Left ventricle myocardium inferior (tissue), 1 donor: ENCODE measurements at regions of chrX and their contacts with region 1.

Region 1: DNA sequence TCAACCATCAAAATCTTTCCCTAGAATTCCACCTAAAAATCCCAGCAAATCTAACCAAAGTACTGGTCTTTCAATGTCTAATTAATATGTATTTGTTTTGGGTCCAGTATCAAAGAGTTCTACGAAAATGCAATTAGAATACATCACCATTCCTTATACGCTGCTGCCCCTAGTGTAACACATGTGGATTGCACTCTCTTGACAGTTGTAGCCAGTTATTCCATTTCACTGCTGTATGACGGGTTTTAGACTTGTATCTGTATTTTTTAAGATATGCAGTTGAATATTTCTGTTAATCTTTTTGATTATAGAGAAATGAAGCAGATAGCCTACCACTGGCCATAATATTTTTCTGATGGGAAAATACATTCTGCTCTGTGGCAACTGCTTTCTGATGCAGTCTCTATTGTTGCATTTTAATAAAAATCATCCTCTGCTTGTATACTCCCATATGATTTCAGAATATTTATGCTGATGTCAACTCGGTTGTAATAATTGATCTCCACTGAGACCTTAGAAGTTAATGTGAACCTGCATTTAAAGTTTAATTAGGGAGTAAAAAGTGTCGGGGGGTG is 17.1 kb upstream of the PAGE2B start:
- DNase-seq: no peak
- H3K4me3 ChIP-seq: peak overlapping the region; percentile 36
- H3K27ac ChIP-seq: no peak overlapping the region
- H3K4me1 ChIP-seq: no peaks in the 10 kb centered on the region
- H3K27me3 ChIP-seq: no peaks in the 10 kb centered on the region
- CTCF ChIP-seq: peak; percentile 79

Region 2: GRCh38 chrX:54891573-54891972 is 166.2 kb before region 1 on chrX:
- intact Hi-C with region 1: loop called (anchors 10 kb)
- DNase-seq: no peak
- H3K4me3 ChIP-seq: no peak overlapping the region
- H3K27ac ChIP-seq: no peak overlapping the region
- H3K4me1 ChIP-seq: no peaks in the 10 kb centered on the region
- H3K27me3 ChIP-seq: no peaks in the 10 kb centered on the region
- CTCF ChIP-seq: peak; percentile 57

Region 3: DNA sequence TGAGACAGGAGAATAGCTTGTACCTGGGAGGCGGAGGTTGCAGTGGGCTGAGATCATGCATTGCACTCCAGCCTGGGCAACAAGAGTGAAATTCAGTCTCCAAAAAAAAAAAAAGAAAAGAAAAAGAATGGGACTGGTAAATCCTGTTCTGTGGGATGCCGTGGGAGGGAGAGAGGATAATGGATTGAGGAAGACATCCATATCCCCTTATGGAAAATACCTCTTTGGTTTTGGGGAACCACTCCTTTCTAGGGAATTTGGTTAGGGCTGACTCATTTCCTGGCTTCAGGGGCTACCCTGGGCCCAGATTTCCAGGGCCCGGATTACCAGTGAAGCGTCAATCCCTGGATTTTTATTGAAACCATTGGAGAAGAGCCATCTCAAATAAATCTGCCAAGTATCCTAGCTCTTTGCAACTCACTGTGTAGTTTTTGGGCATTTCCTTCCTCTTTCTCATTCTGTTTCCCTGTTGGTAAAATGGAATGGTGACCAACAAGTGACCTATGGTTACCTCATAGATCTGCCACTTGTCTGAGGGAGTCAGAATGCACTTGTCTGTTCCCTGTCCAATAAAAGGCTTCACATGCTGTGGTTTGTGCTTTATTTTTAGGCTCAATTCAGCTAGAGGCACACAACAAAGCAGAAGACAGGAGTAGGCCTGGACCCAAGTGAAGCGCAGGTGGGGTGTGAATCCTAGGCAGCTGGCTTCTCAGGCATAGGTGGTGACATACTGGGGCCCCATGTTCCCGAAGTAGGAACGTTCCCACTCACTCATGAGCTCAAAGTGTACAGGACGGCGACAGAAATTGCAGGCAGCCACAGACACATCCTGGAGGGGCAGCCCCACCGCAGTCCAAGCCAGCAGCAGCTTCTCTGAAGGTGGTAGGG is 49.0 kb before region 1 on chrX:
- intact Hi-C with region 1: no loop called
- DNase-seq: peak; percentile 20
- H3K4me3 ChIP-seq: no peak overlapping the region
- H3K27ac ChIP-seq: peak overlapping the region; percentile 79
- H3K4me1 ChIP-seq: peaks cover 20% of the 10 kb centered on the region
- H3K27me3 ChIP-seq: no peaks in the 10 kb centered on the region
- CTCF ChIP-seq: no peak